Heart right ventricle (tissue), 16 donors: ENCODE measurements at regions of chr9 and their contacts with region 1.

Region 1: GRCh38 chr9:19230356-19231125 is at the start of gene DENND4C:
- DNase-seq: peak; percentile 85 to 90
- ATAC-seq: peak; percentile 88 to 95 (median 94)
- H3K4me3 ChIP-seq: peak within 1 kb of the TSS; percentile 83 to 100 (median 98)
- H3K27ac ChIP-seq: peak within 1 kb of the TSS; percentile 96 to 99 (median 98)
- H3K4me1 ChIP-seq: peaks cover 0 to 42% (median 31%) of the 10 kb centered on the region in 9 donors
- H3K27me3 ChIP-seq: no peaks in the 10 kb centered on the region
- CTCF ChIP-seq: peak in 3 of 9 donors; percentile 6 to 44 (median 10)
- total RNA-seq, gene DENND4C: 21.7 to 28.3 (median 23.8) TPM

Region 2: DNA sequence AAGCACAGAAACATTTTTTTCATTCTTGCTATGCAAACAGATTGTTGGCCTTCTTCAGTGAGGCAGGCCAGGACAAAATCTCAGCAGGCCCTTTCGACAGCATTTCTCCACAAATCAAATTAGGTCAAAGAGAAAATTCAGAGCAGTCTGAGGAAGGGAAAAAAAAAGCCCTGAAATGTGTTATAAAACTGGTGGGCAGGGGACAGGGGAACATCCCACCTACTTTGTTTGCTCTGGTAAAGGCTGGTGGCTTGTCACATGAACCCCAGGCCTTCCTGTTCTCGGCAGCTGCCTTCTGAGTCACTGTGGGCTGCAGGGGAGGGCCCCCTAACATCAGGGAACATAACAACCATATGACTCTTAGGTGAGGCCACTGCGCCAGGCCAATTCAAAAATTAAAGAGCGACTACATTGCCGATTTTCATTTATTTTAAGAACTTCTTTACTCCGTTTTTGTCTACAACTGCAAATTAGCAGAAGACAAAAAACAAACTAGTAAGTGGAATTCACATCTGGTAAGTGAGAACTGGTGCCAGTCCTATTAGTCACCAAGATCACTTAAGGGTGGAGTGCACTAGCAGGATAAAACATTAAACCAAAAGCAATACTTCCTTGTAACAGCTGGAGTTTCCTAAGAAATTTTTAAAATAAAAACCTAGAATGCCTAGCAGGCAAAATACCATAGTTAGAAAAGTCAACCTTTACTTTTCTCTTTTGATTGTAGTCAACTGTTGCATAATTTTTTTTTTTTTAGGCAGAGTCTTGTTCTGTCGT is 46.2 kb before region 1 on chr9:
- intact Hi-C with region 1: loop called in 6 of 10 experiments (anchors 2 to 10 kb)
- DNase-seq: peak; percentile 50 to 71
- ATAC-seq: peak; percentile 88 to 96 (median 94)
- H3K4me3 ChIP-seq: no peak overlapping the region
- H3K27ac ChIP-seq: peak overlapping the region; percentile 50 to 90 (median 84)
- H3K4me1 ChIP-seq: peaks cover 5 to 48% (median 37%) of the 10 kb centered on the region in 9 donors
- H3K27me3 ChIP-seq: no peaks in the 10 kb centered on the region
- CTCF ChIP-seq: no peak

Region 3: DNA sequence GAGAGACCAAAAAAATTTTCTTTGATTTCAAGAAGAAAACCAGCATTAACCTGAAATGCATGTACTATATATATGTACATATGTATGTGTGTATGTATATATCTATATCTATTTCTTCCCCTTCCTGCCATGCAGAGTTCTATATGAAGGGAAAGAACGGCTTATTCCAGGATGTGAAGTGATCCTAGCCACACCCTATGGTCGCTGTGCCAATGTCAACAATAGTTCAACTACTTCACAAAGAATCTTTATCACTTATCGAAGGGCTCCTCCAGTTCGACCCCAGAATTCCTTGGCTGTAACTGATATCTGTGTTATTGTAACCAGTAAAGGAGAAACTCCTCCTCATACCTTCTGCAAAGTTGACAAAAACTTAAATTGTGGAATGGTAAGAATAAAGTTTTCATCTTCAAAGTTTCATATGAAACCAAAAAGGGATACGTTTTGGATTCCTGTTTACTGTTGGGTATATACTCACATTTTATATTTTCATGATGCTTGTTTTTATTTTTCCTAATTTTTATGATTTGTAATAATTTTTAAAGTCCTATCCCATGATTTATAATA is 56.2 kb after region 1 on chr9:
- intact Hi-C with region 1: loop called in 3 of 10 experiments (anchors 5 to 10 kb)
- DNase-seq: no peak
- ATAC-seq: no peak
- H3K4me3 ChIP-seq: no peak overlapping the region
- H3K27ac ChIP-seq: no peak overlapping the region
- H3K4me1 ChIP-seq: peaks cover 4 to 33% (median 16%) of the 10 kb centered on the region in 9 donors
- H3K27me3 ChIP-seq: no peaks in the 10 kb centered on the region
- CTCF ChIP-seq: no peak

Region 4: GRCh38 chr9:19320495-19320894 is 90.0 kb after region 1 on chr9:
- intact Hi-C with region 1: loop called in 1 of 10 experiments (anchors 10 kb)
- DNase-seq: no peak
- ATAC-seq: no peak
- H3K4me3 ChIP-seq: no peak overlapping the region
- H3K27ac ChIP-seq: no peak overlapping the region
- H3K4me1 ChIP-seq: no peaks in the 10 kb centered on the region
- H3K27me3 ChIP-seq: no peaks in the 10 kb centered on the region
- CTCF ChIP-seq: no peak

Region 5: GRCh38 chr9:20331095-20331685 is 1100.6 kb after region 1 on chr9:
- intact Hi-C with region 1: loop called in 1 of 10 experiments (anchors 10 kb)
- DNase-seq: no peak
- ATAC-seq: no peak
- H3K4me3 ChIP-seq: no peak overlapping the region
- H3K27ac ChIP-seq: no peak overlapping the region
- H3K4me1 ChIP-seq: no peaks in the 10 kb centered on the region
- H3K27me3 ChIP-seq: no peaks in the 10 kb centered on the region
- CTCF ChIP-seq: no peak